PC-9 (cell line): ENCODE measurements at regions of chr2 and their contacts with region 1.

Region 1: DNA sequence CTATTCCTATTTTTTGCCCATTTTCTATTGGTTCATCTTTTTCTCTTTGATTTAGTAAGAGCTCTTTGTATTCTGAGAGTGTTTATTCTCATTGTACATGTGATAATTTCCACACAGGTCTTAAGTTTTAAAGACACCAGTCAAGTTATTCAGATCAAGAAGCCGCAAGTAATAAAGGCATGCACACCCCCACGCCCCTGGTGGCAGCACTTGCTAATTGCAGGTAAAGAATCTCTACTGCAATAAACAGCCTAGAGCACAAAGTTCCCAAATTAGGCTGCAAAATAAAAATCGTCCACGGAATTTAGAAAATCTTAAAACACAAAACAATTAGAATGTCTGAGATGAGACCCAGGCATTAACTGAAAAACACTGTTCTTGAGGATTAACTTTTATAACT is 45.2 kb downstream of the ST3GAL5 start:
- DNase-seq: no peak
- H3K4me3 ChIP-seq: no peak overlapping the region
- H3K27ac ChIP-seq: no peak overlapping the region
- H3K4me1 ChIP-seq: no peaks in the 10 kb centered on the region
- H3K27me3 ChIP-seq: no peaks in the 10 kb centered on the region
- CTCF ChIP-seq: peak; percentile 68

Region 2: GRCh38 chr2:85741833-85742455 is 101.6 kb before region 1 on chr2:
- CTCF ChIA-PET with region 1: no interaction called
- POLR2A ChIA-PET with region 1: no interaction called
- intact Hi-C with region 1: no loop called
- DNase-seq: no peak
- H3K4me3 ChIP-seq: no peak overlapping the region; the same call in 1 of the 2 replicates
- H3K27ac ChIP-seq: 0 out of 2 replicates have a peak overlapping the region, but pooled peaks have one; percentile 13
- H3K4me1 ChIP-seq: peaks cover 17% of the 10 kb centered on the region
- H3K27me3 ChIP-seq: 0 out of 2 replicates have a peak, but pooled peaks cover 12% of the 10 kb centered on the region
- CTCF ChIP-seq: no peak

Region 3: GRCh38 chr2:85981579-85982247 is 138.2 kb after region 1 on chr2:
- CTCF ChIA-PET with region 1: no interaction called
- POLR2A ChIA-PET with region 1: interaction called, 11 read pairs
- intact Hi-C with region 1: no loop called
- DNase-seq: no peak
- H3K4me3 ChIP-seq: no peak overlapping the region
- H3K27ac ChIP-seq: no peak overlapping the region
- H3K4me1 ChIP-seq: no peaks in the 10 kb centered on the region
- H3K27me3 ChIP-seq: no peaks in the 10 kb centered on the region
- CTCF ChIP-seq: no peak